CD14-positive monocyte (primary cell): ENCODE measurements at regions of chr2 and their contacts with region 1.

Region 1: GRCh38 chr2:159712143-159712928 is at the start of gene MARCHF7:
- DNase-seq: peak; percentile 91 to 96 (median 94)
- H3K4me3 ChIP-seq: peak within 1 kb of the TSS; percentile 89 to 95 (median 95)
- H3K4me3 Mint-ChIP-seq: peak within 1 kb of the TSS; percentile 94 to 98
- H3K27ac ChIP-seq: peak within 1 kb of the TSS; percentile 94 to 97
- H3K27ac Mint-ChIP-seq: peak within 1 kb of the TSS; percentile 99 to 100 (median 99)
- H3K4me1 ChIP-seq: peaks cover 23 to 44% of the 10 kb centered on the region in 2 donors
- H3K4me1 Mint-ChIP-seq: peaks cover 49% of the 10 kb centered on the region
- H3K27me3 ChIP-seq: no peaks in the 10 kb centered on the region
- H3K27me3 Mint-ChIP-seq: no peaks in the 10 kb centered on the region
- CTCF ChIP-seq: peak; percentile 42
- polyA plus RNA-seq, gene MARCHF7: 46.7 to 124 (median 102) TPM

Region 2: DNA sequence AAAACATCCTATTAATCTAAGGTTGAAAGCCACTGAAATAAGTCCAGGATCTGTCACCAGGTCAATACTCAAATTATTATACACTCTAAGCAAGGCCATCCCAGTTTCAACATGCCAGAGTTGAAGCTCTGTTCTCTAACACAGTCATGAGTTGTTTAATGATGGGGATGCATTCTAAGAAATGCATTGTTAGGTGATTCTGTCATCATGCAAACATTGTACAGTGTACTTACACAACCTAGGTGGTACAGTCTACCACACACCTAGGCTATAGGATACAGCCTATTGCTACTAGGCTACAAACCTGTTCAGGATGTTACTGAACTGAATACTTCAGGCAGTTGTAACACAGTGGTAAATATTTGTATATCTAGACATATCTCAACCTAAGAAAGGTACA is 258.2 kb before region 1 on chr2:
- intact Hi-C with region 1: no loop called
- DNase-seq: no peak
- H3K4me3 ChIP-seq: no peak overlapping the region
- H3K4me3 Mint-ChIP-seq: no peak overlapping the region
- H3K27ac ChIP-seq: no peak overlapping the region
- H3K27ac Mint-ChIP-seq: no peak overlapping the region
- H3K4me1 ChIP-seq: peaks cover 7 to 10% of the 10 kb centered on the region in 2 donors
- H3K4me1 Mint-ChIP-seq: peaks cover 18% of the 10 kb centered on the region
- H3K27me3 ChIP-seq: no peaks in the 10 kb centered on the region
- H3K27me3 Mint-ChIP-seq: peaks cover 0 to 2% (median 1%) of the 10 kb centered on the region in 3 donors
- CTCF ChIP-seq: no peak

Region 3: DNA sequence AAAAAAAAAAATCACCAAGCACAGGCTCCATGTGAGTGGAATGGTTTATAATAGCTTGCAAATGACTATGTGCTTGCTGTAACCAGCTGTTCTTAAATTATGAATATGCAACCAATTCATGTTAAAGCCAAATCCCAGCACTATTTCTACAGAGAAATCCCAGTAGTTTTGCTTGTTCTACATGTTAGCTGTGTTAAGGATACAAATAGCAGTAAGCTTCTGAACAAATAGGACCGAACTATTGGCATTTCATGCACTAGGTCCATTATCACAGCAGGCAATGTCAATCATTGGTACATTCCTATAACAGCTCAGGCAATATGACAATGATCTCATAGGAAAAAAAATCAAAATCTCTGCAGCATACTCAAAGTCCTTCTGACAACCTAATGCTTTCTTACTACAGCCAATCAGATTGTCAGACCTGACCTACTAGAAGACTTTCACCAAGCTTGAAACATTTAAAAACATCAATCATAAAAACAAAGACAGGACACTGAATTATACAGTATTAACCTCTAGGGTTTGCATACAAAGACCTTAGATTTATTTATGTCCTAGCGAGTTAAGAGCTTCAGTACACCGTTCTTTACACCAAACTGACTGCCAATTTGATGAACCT is 102.4 kb before region 1 on chr2:
- intact Hi-C with region 1: no loop called
- DNase-seq: no peak
- H3K4me3 ChIP-seq: no peak overlapping the region
- H3K4me3 Mint-ChIP-seq: no peak overlapping the region
- H3K27ac ChIP-seq: no peak overlapping the region
- H3K27ac Mint-ChIP-seq: peak overlapping the region in 1 of 7 donors; percentile 33
- H3K4me1 ChIP-seq: peaks cover 3 to 27% of the 10 kb centered on the region in 2 donors
- H3K4me1 Mint-ChIP-seq: peaks cover 38% of the 10 kb centered on the region
- H3K27me3 ChIP-seq: no peaks in the 10 kb centered on the region
- H3K27me3 Mint-ChIP-seq: no peaks in the 10 kb centered on the region
- CTCF ChIP-seq: no peak

Region 4: DNA sequence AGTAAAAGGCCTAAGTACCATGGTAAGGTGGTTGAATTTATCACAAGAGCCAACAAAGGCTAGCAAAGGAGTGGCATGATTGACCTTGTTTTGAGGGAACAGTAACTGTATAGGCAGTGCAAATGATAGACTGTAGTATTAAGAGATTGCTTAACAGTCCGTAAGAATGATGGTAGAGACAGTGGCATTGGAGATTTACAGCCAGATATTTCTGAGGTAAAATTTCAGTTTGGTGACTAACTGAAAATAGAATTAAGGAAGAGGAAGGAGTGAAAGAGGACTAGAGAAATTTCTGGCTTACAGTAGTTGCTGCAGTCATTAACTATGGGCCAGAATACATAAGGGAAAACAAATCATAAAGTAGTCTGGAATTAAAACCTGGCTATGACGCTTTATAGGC is 91.5 kb before region 1 on chr2:
- intact Hi-C with region 1: loop called in 1 of 2 experiments (anchors 10 kb)
- DNase-seq: peak in 2 of 3 donors; percentile 10 to 37
- H3K4me3 ChIP-seq: no peak overlapping the region
- H3K4me3 Mint-ChIP-seq: no peak overlapping the region
- H3K27ac ChIP-seq: peak overlapping the region in 1 of 2 donors; percentile 49
- H3K27ac Mint-ChIP-seq: peak overlapping the region in 6 of 7 donors; percentile 9 to 73 (median 34)
- H3K4me1 ChIP-seq: peaks cover 20 to 34% of the 10 kb centered on the region in 2 donors
- H3K4me1 Mint-ChIP-seq: peaks cover 45% of the 10 kb centered on the region
- H3K27me3 ChIP-seq: no peaks in the 10 kb centered on the region
- H3K27me3 Mint-ChIP-seq: no peaks in the 10 kb centered on the region
- CTCF ChIP-seq: no peak

Region 5: GRCh38 chr2:159637971-159638501 is 74.3 kb before region 1 on chr2:
- intact Hi-C with region 1: loop called in 1 of 2 experiments (anchors 10 kb)
- DNase-seq: peak; percentile 27 to 52 (median 39)
- H3K4me3 ChIP-seq: no peak overlapping the region
- H3K4me3 Mint-ChIP-seq: no peak overlapping the region
- H3K27ac ChIP-seq: no peak overlapping the region
- H3K27ac Mint-ChIP-seq: peak overlapping the region in 6 of 7 donors; percentile 5 to 83 (median 51)
- H3K4me1 ChIP-seq: peaks cover 29 to 41% of the 10 kb centered on the region in 2 donors
- H3K4me1 Mint-ChIP-seq: peaks cover 62% of the 10 kb centered on the region
- H3K27me3 ChIP-seq: no peaks in the 10 kb centered on the region
- H3K27me3 Mint-ChIP-seq: no peaks in the 10 kb centered on the region
- CTCF ChIP-seq: no peak

Region 6: GRCh38 chr2:159797543-159798375 is 85.4 kb after region 1 on chr2 and contains the start of gene CD302:
- intact Hi-C with region 1: loop called in 1 of 2 experiments (anchors 5 kb)
- DNase-seq: peak; percentile 29 to 53 (median 43)
- H3K4me3 ChIP-seq: peak within 1 kb of the TSS; percentile 79 to 95 (median 86)
- H3K4me3 Mint-ChIP-seq: peak within 1 kb of the TSS; percentile 97
- H3K27ac ChIP-seq: peak within 1 kb of the TSS; percentile 91 to 95
- H3K27ac Mint-ChIP-seq: peak within 1 kb of the TSS; percentile 88 to 96 (median 95)
- H3K4me1 ChIP-seq: peaks cover 68 to 81% of the 10 kb centered on the region in 2 donors
- H3K4me1 Mint-ChIP-seq: peaks cover 74% of the 10 kb centered on the region
- H3K27me3 ChIP-seq: no peaks in the 10 kb centered on the region
- H3K27me3 Mint-ChIP-seq: peaks cover 0 to 2% (median 0%) of the 10 kb centered on the region in 3 donors
- CTCF ChIP-seq: no peak
- polyA plus RNA-seq, gene CD302: 90.3 to 214 (median 146) TPM